Activated B cell treated with CpG ODN at 0.5 μM for 24 hours (primary cell): ENCODE measurements at regions of chr7 and their contacts with region 1.

Region 1: DNA sequence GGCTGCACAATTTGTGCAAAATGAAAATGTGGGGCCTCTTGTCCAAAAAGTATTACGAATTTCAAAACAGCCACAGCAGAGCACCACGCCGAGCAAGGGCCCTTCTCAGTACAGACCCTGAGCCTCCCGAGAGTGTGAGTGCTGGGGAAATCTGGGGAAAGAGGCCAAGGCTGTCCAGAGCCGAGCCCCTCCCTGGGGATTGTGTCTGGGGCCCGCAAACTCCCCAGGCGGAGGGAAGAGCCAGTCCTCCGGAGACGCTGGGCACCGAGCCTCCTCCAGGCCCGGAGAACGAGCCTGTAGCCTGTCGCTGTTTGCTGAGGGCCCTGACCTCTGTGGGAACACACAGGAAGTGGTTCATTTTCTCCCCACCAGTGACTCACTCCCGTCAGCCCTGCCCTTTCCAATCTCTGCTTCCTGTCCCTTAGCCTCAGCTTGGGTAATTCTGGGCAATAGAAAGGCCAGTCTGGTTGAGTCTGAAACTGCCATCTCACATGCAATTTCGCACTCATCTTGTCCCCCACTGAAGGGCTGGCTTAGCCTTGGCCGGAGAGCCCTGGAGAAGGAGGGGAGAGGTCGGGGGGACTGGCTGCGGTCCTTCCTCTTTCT is 19.5 kb upstream of the GNA12 start:
- DNase-seq: peak; percentile 41
- ATAC-seq: peak; percentile 91
- H3K4me3 Mint-ChIP-seq: peak overlapping the region; percentile 66
- H3K27ac Mint-ChIP-seq: peak overlapping the region; percentile 87
- H3K4me1 Mint-ChIP-seq: peaks cover 24% of the 10 kb centered on the region
- H3K27me3 Mint-ChIP-seq: no peaks in the 10 kb centered on the region
- CTCF ChIP-seq: no peak

Region 2: DNA sequence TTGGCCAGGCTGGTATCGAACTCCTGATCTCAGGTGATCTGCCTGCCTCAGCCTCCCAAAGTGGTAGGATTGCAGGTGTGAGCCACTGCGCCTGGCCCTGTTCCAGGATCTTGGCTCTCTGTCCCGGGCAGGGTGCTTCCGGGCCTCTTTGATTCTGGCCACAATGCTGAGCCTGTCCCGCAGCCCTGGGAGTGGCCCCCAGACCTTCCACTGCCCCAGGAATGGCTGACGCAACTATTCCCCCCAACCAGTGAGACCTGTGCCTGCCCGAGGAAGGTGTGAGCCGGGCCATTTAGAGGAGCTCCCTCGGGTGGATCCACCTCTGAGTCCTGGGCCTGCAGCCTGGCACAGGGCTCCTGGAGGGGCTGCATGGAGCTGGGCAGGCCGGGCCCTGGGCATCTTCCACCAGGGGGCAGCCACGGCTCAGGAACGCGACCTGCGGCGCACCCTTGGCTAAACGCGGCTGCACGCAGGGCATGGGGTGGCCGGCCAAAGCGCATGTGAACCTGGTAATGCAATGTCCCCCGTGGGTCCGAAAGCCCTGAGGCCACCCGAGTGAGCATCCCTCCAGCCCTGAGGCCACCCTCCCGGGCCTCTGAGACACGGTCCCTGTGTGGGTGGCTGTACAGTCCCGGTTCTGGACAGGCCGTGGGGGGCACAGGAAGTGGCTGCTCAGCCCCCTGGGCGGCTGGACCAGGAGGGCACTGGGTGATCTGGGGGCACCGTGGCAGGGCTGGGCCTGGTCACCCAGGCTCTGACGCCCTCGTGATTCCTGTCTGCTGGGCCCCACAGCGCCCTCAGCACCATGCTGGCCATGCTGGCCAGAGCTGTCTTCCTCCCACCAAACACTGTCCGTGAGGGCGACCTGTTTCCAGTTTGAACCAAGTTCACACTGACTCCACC is 412.1 kb before region 1 on chr7:
- CTCF ChIA-PET with region 1: interaction called, 10 read pairs
- POLR2A ChIA-PET with region 1: no interaction called
- intact Hi-C with region 1: loop called (anchors 1 kb)
- DNase-seq: peak; percentile 81
- ATAC-seq: peak; percentile 99
- H3K4me3 Mint-ChIP-seq: peak overlapping the region; percentile 74
- H3K27ac Mint-ChIP-seq: no peak overlapping the region
- H3K4me1 Mint-ChIP-seq: peaks cover 6% of the 10 kb centered on the region
- H3K27me3 Mint-ChIP-seq: no peaks in the 10 kb centered on the region
- CTCF ChIP-seq: peak; percentile 88

Region 3: GRCh38 chr7:2844165-2844898 is 19.2 kb before region 1 on chr7 and contains the start of gene GNA12:
- CTCF ChIA-PET with region 1: interaction called, 3 read pairs
- POLR2A ChIA-PET with region 1: no interaction called
- intact Hi-C with region 1: loop called (anchors 1 kb)
- DNase-seq: peak; percentile 97
- ATAC-seq: peak; percentile 93
- H3K4me3 Mint-ChIP-seq: peak within 1 kb of the TSS; percentile 87
- H3K27ac Mint-ChIP-seq: peak within 1 kb of the TSS; percentile 83
- H3K4me1 Mint-ChIP-seq: peaks cover 52% of the 10 kb centered on the region
- H3K27me3 Mint-ChIP-seq: no peaks in the 10 kb centered on the region
- CTCF ChIP-seq: no peak
- total RNA-seq, gene GNA12: 52.3 and 54.6 TPM in 2 replicates

Region 4: DNA sequence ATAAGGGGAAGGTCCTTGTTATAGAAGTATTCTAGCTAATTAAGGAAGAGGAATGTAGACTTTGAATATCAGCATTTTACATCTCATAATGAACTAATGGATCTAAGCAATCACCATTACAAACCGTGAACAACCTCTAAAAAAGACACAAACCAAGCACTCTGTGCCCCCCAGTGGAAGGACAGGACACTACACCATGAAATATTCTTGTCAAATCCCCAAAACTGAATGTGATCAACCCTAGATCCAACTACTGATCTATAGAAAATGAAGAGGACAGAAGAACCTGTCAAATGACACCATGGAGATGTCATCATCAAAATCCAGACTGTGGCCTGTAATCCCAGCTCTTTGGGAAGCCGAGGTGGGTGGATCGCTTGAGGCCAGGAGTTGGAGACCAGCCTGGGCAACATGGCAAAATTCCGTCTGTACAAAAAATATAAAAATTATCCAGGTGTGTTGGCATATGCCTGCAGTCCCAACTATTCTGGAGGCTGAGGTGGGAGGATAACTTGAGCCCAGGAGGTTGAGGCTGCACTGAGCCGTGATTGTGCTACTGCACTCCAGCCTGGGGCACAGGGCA is 291.4 kb after region 1 on chr7:
- CTCF ChIA-PET with region 1: interaction called, 51 read pairs
- POLR2A ChIA-PET with region 1: interaction called, 3 read pairs
- intact Hi-C with region 1: loop called (anchors 1 kb)
- DNase-seq: no peak
- ATAC-seq: peak; percentile 84
- H3K4me3 Mint-ChIP-seq: no peak overlapping the region
- H3K27ac Mint-ChIP-seq: no peak overlapping the region
- H3K4me1 Mint-ChIP-seq: peaks cover 36% of the 10 kb centered on the region
- H3K27me3 Mint-ChIP-seq: peaks cover 2% of the 10 kb centered on the region
- CTCF ChIP-seq: peak; percentile 47

Region 5: DNA sequence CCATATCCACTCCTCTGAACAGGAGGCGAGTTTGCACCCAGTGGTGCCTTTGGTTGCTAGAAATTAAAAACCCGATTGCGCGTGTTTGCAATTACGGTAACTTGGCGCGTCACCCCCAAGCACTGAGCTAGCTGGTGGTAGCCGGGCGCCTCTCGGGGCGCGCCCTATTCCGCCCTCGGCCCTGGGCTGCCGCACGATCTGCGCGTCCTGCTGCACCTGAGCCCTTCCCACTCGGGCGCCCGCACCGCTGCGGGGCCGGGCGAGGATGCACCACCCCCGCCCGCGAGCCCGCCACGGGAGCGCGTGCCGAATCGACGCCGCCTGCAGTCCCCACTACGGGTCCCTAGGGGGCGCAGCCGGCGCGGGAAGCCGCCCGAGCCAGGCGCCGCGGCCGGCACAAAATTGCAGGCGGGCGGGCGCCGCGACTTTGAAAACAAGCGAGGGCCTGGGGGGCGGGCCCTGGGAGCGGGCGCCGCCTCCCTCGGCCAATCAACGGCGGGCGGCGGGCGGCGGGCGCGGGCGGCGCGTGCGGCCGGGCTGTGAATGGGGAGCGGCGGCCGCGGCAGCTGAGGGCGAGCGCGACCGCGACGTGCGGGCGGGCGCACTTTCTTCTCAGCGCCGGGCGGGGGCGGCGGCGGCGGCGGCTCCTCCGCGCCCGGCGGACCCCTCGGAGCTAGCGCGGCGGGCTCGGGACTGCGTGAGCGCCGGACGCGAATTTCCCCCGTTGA is 437.3 kb after region 1 on chr7 and contains the start of gene SDK1:
- CTCF ChIA-PET with region 1: interaction called, 3 read pairs
- POLR2A ChIA-PET with region 1: no interaction called
- intact Hi-C with region 1: loop called (anchors 5 kb)
- DNase-seq: peak; percentile 94
- ATAC-seq: peak; percentile 95
- H3K4me3 Mint-ChIP-seq: peak within 1 kb of the TSS; percentile 84
- H3K27ac Mint-ChIP-seq: no peak within 1 kb of the TSS
- H3K4me1 Mint-ChIP-seq: peaks cover 11% of the 10 kb centered on the region
- H3K27me3 Mint-ChIP-seq: peaks cover 33% of the 10 kb centered on the region
- CTCF ChIP-seq: no peak
- total RNA-seq, gene SDK1: 0.32 and 1.3 TPM in 2 replicates

Region 6: DNA sequence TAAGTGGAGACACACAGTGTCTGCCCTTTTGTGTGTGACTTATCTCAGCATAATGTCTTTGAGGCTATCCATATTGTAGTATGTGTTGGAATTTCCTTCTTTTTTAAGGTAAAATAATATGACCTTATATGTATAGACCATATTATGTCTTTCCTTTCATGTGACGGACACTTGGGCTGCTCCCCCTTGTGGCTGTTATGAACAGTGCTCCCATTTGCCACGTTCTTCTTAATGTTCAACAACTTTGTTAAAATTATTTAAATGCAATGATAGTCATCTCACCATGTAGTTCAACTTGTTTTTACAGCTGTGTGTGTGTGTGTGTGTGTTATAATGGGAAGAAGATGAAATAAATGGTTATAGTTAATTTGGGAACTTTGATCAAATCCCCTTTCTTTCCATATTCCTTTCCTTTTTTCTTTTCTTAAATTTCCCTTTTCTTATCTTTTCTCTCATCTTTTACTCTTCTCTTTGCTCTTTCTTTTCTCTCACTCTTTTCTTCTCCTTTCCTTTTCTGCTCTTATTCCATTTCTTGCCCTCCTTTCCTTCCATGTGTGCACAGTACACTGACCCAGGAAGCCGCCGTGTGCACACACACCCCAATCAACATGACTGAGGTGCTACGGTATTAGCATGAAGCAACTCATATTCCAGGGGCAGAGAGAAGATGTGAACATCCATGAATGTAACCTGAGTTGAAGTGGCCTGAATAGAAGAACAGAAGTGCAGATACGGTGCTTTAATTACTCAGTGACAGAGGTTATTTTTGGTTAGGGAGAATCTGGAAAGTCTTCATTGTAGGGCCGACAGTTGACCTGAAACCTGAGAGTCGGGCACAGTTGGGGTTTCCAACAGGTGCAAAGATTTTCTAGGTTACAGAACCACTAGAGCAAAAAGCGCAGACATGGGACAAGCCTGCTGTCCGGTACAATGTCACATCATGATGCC is 1034.1 kb after region 1 on chr7:
- CTCF ChIA-PET with region 1: interaction called, 8 read pairs
- POLR2A ChIA-PET with region 1: no interaction called
- intact Hi-C with region 1: loop called (anchors 1 kb)
- DNase-seq: no peak
- ATAC-seq: peak; percentile 56
- H3K4me3 Mint-ChIP-seq: no peak overlapping the region
- H3K27ac Mint-ChIP-seq: no peak overlapping the region
- H3K4me1 Mint-ChIP-seq: no peaks in the 10 kb centered on the region
- H3K27me3 Mint-ChIP-seq: peaks cover 9% of the 10 kb centered on the region
- CTCF ChIP-seq: peak; percentile 97